ENCODE measurements at regions of chrX and their contacts with region 1.

Region 1: GRCh38 chrX:120468825-120469525 is at the start of gene LAMP2:
- DNase-seq: peak; percentile 86 to 91 (median 88)
- H3K4me3 ChIP-seq: peak within 1 kb of the TSS; percentile 63
- H3K27ac ChIP-seq: peak within 1 kb of the TSS; percentile 60 to 72
- H3K4me1 ChIP-seq: no peaks in the 10 kb centered on the region
- H3K27me3 ChIP-seq: no peaks in the 10 kb centered on the region
- CTCF ChIP-seq: no peak
- EP300 ChIP-seq: no peak
- POLR2A ChIP-seq: peak; percentile 87
- total RNA-seq, gene LAMP2: 68.1 to 129 (median 87.3) TPM

Region 2: GRCh38 chrX:120310861-120311726 is 157.9 kb before region 1 on chrX and contains the start of gene TMEM255A:
- intact Hi-C with region 1: loop called in 1 of 4 experiments (anchors 5 kb)
- DNase-seq: peak; percentile 48 to 72 (median 68)
- H3K4me3 ChIP-seq: peak within 1 kb of the TSS; percentile 44
- H3K27ac ChIP-seq: peak within 1 kb of the TSS; percentile 30 to 39
- H3K4me1 ChIP-seq: no peaks in the 10 kb centered on the region
- H3K27me3 ChIP-seq: no peaks in the 10 kb centered on the region
- CTCF ChIP-seq: no peak
- EP300 ChIP-seq: no peak
- POLR2A ChIP-seq: no peak
- total RNA-seq, gene TMEM255A: 6.7 to 22.5 (median 16.3) TPM